Natural killer cell (primary cell): ENCODE measurements at regions of chr10 and their contacts with region 1.

Region 1: GRCh38 chr10:97334370-97335175 is at the start of gene FRAT2:
- DNase-seq: peak; percentile 89 to 94
- ATAC-seq: peak; percentile 89 to 95 (median 91)
- H3K4me3 ChIP-seq: peak within 1 kb of the TSS; percentile 69
- H3K4me3 Mint-ChIP-seq: peak within 1 kb of the TSS; percentile 95
- H3K27ac ChIP-seq: peak within 1 kb of the TSS; percentile 100
- H3K27ac Mint-ChIP-seq: peak within 1 kb of the TSS; percentile 85
- H3K4me1 ChIP-seq: peaks cover 32% of the 10 kb centered on the region
- H3K4me1 Mint-ChIP-seq: peaks cover 24 to 35% of the 10 kb centered on the region in 2 donors
- H3K27me3 ChIP-seq: peaks cover 2% of the 10 kb centered on the region
- H3K27me3 Mint-ChIP-seq: peaks cover 0 to 2% of the 10 kb centered on the region in 2 donors
- CTCF ChIP-seq: no peak
- total RNA-seq, gene FRAT2: 18.7 to 23.4 (median 22.2) TPM

Region 2: DNA sequence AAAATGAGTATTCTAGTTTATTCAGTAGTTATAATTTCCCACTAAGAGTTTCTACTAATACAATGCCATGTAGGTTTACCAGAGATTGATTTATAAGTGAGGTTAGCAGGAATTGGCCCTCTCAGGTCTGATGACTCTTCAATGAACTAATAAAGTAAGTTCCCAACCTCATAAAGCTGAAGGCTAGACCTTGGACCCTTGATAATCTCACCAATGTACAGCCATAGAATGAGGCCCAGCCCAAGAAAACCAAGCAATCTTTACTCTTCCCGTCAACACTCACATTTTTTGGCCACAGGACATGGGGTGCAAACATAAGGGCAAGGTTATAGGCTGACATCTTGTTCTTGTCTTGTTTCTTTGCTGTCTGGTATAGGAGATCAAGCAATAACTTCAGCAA is 75.5 kb before region 1 on chr10:
- intact Hi-C with region 1: no loop called
- DNase-seq: no peak
- ATAC-seq: no peak
- H3K4me3 ChIP-seq: no peak overlapping the region
- H3K4me3 Mint-ChIP-seq: no peak overlapping the region
- H3K27ac ChIP-seq: no peak overlapping the region
- H3K27ac Mint-ChIP-seq: no peak overlapping the region
- H3K4me1 ChIP-seq: no peaks in the 10 kb centered on the region
- H3K4me1 Mint-ChIP-seq: no peaks in the 10 kb centered on the region
- H3K27me3 ChIP-seq: no peaks in the 10 kb centered on the region
- H3K27me3 Mint-ChIP-seq: no peaks in the 10 kb centered on the region
- CTCF ChIP-seq: no peak

Region 3: DNA sequence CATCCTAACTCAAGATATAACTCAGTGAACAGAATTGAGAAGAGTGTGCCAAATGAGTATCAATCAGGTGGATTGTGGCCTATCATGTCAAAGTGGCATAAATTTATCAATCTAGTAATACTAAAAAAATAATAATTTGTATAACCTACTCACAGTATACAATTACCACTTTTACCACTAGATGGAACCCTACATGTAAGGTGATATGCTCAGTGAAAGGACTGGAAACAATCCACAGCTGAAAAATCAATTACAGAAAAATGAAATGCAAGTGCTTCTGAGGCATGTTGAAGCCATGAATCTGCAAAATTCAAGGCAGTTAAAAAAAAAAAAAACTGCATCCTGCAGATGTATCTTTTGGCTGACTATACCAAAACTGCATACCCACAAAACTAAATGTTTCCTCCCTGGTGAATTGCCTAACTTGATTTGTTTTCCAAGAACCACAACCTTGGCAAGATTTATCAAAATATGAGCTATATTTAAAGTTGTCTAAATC is 56.0 kb before region 1 on chr10:
- intact Hi-C with region 1: loop called (anchors 5 kb)
- DNase-seq: peak in 1 of 2 donors; percentile 74
- ATAC-seq: peak; percentile 79 to 87 (median 83)
- H3K4me3 ChIP-seq: no peak overlapping the region
- H3K4me3 Mint-ChIP-seq: no peak overlapping the region
- H3K27ac ChIP-seq: no peak overlapping the region
- H3K27ac Mint-ChIP-seq: no peak overlapping the region
- H3K4me1 ChIP-seq: peaks cover 3% of the 10 kb centered on the region
- H3K4me1 Mint-ChIP-seq: peaks cover 0 to 8% of the 10 kb centered on the region in 2 donors
- H3K27me3 ChIP-seq: no peaks in the 10 kb centered on the region
- H3K27me3 Mint-ChIP-seq: no peaks in the 10 kb centered on the region
- CTCF ChIP-seq: peak; percentile 70

Region 4: DNA sequence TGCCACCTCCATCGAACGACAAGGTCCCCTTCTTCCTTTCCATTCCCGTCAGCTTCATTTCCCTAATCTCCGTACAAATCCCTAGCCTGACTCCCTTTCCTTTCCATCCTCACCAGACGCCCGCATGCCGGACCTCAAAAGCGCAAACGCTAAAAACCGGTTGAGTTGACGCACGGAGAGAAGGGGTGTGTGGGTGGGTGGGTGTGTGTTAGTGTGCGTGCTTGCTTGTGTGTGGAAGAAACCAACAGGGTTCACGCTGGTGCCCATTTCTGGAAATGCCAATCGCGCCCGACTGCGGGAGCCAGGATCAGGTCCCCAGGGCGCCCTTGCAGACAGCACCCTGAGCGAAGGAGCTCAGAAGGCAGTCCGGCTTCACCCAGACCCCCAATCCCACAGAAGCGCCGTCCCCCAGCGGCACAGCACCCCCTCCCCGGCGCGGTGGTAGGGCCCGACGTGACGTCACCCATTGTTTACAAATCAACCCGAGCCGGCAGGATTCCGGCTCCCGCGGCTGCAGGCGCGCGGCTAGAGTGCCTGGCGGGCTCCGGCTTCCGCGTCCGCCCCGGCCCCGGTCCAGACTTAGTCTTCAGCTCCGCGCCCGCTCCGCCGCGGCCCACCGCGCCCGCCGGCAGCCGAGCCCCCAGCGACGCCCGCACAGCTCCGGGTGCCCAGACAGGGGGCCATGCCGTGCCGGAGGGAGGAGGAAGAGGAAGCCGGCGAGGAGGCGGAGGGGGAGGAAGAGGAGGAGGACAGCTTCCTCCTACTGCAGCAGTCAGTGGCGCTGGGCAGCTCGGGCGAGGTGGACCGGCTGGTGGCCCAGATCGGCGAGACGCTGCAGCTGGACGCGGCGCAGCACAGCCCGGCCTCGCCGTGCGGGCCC is 15.6 kb before region 1 on chr10 and contains the start of gene FRAT1:
- intact Hi-C with region 1: loop called (anchors 1 kb)
- DNase-seq: peak; percentile 93 to 95
- ATAC-seq: peak; percentile 77 to 89 (median 79)
- H3K4me3 ChIP-seq: peak within 1 kb of the TSS; percentile 64
- H3K4me3 Mint-ChIP-seq: peak within 1 kb of the TSS; percentile 98
- H3K27ac ChIP-seq: peak within 1 kb of the TSS; percentile 100
- H3K27ac Mint-ChIP-seq: peak within 1 kb of the TSS; percentile 92 to 99
- H3K4me1 ChIP-seq: peaks cover 33% of the 10 kb centered on the region
- H3K4me1 Mint-ChIP-seq: peaks cover 33% of the 10 kb centered on the region in 2 donors
- H3K27me3 ChIP-seq: no peaks in the 10 kb centered on the region
- H3K27me3 Mint-ChIP-seq: no peaks in the 10 kb centered on the region
- CTCF ChIP-seq: no peak
- total RNA-seq, gene FRAT1: 26.0 to 45.0 (median 32.1) TPM

Region 5: DNA sequence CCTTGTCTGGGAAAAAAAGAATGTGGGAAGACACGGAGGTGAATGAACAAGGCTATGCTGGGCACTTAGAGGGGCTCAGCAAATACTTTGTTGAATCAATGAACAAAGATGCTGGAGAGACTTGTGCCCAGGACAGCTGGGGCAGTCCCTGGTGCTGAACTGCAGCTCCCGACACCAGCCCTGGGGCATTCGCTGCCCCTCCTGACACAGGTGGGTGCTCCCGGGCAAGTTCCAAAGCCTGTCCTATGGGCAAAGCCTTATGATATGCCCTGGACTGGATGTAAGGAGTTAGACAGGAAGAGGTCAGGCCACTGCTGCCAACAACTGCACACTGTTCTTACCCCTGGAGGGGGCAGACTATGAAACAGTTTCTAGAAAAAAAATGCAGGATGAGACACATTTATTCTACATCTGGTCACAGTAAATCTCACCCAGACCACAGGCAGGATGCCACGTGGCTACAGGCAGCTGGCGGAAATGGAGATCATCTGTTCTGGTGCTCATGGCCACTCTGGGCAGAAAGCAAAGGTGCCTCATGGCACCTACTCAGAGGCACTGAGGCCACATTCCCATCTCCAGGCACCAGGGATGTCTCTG is 21.8 kb after region 1 on chr10:
- intact Hi-C with region 1: loop called (anchors 2 kb)
- DNase-seq: peak; percentile 49 to 73
- ATAC-seq: peak; percentile 91 to 93 (median 92)
- H3K4me3 ChIP-seq: no peak overlapping the region
- H3K4me3 Mint-ChIP-seq: peak overlapping the region; percentile 64
- H3K27ac ChIP-seq: peak overlapping the region; percentile 62
- H3K27ac Mint-ChIP-seq: peak overlapping the region; percentile 82 to 89
- H3K4me1 ChIP-seq: peaks cover 24% of the 10 kb centered on the region
- H3K4me1 Mint-ChIP-seq: peaks cover 17% of the 10 kb centered on the region in 2 donors
- H3K27me3 ChIP-seq: no peaks in the 10 kb centered on the region
- H3K27me3 Mint-ChIP-seq: no peaks in the 10 kb centered on the region
- CTCF ChIP-seq: peak; percentile 16

Region 6: DNA sequence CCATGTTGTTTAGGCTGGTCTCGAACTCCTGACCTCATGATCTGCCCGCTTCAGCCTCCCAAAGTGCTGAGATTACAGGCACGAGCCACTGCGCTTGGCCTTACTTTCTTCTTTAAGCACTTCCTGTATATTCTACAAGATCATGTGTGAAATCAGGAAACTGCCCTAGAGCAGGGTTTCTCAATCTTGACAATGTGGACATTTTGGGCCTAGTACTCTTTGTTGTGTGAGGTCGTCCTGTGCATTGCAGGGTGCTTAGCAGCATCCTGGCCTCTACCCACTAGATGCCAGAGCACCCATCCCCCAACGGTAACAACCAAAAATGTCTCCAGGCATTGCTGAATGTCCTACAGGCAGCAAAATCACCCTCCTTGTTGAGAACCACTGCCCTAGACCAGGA is 41.8 kb after region 1 on chr10:
- intact Hi-C with region 1: no loop called
- DNase-seq: no peak
- ATAC-seq: peak in 1 of 3 donors; percentile 19
- H3K4me3 ChIP-seq: no peak overlapping the region
- H3K4me3 Mint-ChIP-seq: no peak overlapping the region
- H3K27ac ChIP-seq: no peak overlapping the region
- H3K27ac Mint-ChIP-seq: peak overlapping the region in 1 of 2 donors; percentile 14
- H3K4me1 ChIP-seq: no peaks in the 10 kb centered on the region
- H3K4me1 Mint-ChIP-seq: no peaks in the 10 kb centered on the region
- H3K27me3 ChIP-seq: no peaks in the 10 kb centered on the region
- H3K27me3 Mint-ChIP-seq: no peaks in the 10 kb centered on the region
- CTCF ChIP-seq: no peak